BJ (cell line): ENCODE measurements at regions of chr19 and their contacts with region 1.

Region 1: DNA sequence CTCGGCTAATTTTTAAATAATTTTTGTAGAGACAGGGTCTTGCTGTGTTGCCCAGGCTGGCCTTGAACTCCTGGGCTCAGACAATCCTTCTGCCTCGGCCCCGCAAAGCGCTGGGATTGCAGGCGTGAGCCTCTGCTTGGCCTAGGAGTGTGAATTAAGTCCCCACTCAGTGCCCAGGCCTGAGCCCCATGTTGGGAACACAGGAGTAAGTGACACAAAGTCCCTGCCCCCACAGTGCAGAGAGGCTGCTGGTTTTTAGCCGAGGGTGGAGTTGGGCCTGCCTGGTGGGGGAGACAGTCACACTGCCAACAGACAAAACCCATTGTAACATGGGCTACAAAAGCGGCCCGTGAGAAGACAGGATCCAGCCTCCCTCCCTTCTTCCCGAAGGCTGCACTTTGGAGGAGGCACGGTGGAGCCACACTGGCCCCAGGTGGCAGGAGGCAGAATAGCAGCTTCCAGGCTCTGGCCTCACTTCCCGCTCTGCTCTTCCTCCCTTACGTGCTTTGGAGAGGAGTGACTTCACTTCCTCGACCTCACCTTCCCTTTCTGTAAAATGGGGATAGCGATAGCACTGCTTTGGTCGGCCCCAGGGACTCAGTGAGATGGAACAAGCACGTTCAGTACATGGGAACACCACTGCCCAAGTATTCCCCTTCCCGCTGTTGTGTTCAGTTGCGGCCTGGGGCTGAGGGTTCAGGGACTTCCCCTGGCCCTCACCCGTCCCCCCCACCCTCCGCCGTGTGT is 15.2 kb upstream of the EHD2 start:
- DNase-seq: no peak
- H3K4me3 ChIP-seq: no peak overlapping the region
- H3K27me3 ChIP-seq: no peaks in the 10 kb centered on the region
- CTCF ChIP-seq: peak; percentile 100

Region 2: GRCh38 chr19:47428177-47428894 is 269.7 kb before region 1 on chr19:
- CTCF ChIA-PET with region 1: interaction called, 428 read pairs
- POLR2A ChIA-PET with region 1: no interaction called
- DNase-seq: peak; percentile 97
- H3K4me3 ChIP-seq: peak overlapping the region; percentile 24; the same call in 1 of the 2 replicates
- H3K27me3 ChIP-seq: peaks cover 9% of the 10 kb centered on the region
- CTCF ChIP-seq: no peak

Region 3: GRCh38 chr19:47436712-47437401 is 261.2 kb before region 1 on chr19:
- CTCF ChIA-PET with region 1: interaction called, 428 read pairs
- POLR2A ChIA-PET with region 1: no interaction called
- DNase-seq: no peak
- H3K4me3 ChIP-seq: no peak overlapping the region
- H3K27me3 ChIP-seq: peaks cover 2% of the 10 kb centered on the region; the same call in 1 of the 2 replicates
- CTCF ChIP-seq: peak; percentile 90

Region 4: GRCh38 chr19:47514869-47515588 is 183.0 kb before region 1 on chr19 and contains the start of gene NAPA:
- CTCF ChIA-PET with region 1: interaction called, 15 read pairs
- POLR2A ChIA-PET with region 1: no interaction called
- DNase-seq: peak; percentile 99
- H3K4me3 ChIP-seq: peak within 1 kb of the TSS; percentile 78
- H3K27me3 ChIP-seq: 0 out of 2 replicates have a peak, but pooled peaks cover 1% of the 10 kb centered on the region
- CTCF ChIP-seq: no peak
- polyA plus RNA-seq, gene NAPA: 100 and 203 TPM in 2 replicates

Region 5: GRCh38 chr19:47540728-47541127 is 157.3 kb before region 1 on chr19:
- CTCF ChIA-PET with region 1: interaction called, 11 read pairs
- POLR2A ChIA-PET with region 1: no interaction called
- DNase-seq: no peak
- H3K4me3 ChIP-seq: no peak overlapping the region
- H3K27me3 ChIP-seq: peaks cover 7% of the 10 kb centered on the region; the same call in 1 of the 2 replicates
- CTCF ChIP-seq: peak; percentile 63

Region 6: DNA sequence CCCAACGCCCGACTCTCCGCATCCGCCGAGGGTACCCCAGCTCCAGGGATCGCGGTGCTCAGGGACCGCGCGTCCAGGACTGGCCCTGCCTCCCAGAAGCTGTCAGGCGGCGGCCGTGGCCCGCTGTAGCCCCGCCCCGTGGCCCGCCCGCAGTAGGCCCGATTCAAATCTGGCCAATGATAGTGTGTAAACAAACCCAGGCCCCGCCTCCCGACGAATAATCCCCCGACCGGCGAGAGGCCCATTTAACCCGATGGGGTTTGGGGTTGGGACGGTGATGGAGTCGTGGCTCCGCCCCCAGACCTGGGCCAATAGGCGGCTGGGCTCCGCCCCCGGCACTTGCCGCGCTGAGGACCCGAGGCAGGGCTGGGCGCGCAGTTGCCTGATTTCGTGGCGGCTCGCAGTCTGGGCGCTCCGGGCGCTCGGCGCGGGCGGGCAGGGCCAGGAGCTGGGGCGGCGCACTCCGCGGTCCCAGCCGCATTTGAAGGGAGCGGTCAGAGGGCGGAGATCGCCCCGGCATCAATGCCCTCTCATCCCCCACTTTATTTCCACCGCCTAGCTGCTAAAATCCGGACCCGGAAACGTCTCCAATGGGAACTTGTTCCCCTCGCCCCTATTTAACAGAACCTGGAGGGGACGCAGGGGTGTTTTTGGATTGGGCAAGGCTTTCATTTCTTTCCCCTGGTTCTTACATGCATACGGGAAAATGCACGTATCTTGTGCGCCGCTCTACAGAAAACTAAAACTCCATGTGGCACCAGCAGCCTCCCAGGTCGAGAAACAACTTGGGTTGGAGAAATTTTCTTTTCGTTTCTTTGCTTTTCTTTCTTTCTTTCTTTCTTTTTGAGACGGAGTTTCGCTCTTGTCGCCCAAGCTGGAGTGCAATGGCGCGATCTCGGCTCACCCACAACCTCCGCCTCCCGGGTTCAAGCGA is 97.5 kb before region 1 on chr19:
- CTCF ChIA-PET with region 1: interaction called, 10 read pairs
- POLR2A ChIA-PET with region 1: no interaction called
- DNase-seq: peak; percentile 94
- H3K4me3 ChIP-seq: peak overlapping the region; percentile 44
- H3K27me3 ChIP-seq: no peaks in the 10 kb centered on the region
- CTCF ChIP-seq: no peak

Region 7: DNA sequence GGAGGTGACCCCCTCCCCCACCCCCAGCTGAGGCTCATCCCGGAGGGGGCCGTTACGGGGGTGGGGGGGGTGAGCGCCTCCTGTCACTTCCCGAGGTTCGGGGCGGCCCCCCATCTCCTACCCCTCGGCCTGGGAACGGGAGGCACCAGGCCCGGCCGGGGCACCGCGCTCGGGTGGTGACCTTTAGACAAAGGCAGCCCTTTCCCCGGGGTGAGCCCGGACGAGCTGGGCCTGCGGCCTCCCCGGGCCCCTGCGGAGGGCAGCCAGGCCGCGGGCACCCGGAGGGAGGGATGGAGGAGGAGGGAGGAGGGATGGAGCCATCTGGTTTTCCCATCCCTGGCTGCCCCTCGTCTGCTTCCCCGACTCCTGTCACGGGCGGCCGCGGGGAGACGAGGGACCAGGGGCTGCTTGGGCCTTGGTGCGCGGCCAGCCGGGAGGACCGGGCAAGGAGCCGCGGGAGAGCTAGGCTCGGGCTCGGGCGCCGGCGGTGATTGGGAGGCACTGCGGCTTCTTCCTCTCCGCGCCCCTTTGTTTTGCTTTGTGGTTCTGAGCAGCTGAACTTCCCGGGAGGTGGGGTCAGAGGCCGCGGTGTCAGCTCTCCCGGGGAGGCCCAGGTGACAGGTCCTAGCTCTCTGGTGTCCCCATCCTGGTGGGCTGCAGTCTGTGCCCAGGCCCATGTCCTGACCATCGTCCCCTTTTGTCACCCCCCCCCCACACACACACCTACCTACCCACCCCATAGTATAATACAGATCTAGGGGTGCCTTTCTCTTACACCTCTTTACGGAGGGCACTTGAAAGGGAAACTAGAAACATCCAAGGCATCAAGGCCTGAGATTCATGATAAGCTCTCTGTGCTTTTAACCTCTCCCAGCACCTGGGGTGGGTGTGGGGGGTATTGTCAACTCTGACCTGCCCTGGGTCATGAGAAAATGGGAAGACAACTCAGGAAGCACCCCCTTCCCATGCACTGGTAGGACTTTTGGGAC is 87.8 kb before region 1 on chr19:
- CTCF ChIA-PET with region 1: interaction called, 11 read pairs
- POLR2A ChIA-PET with region 1: no interaction called
- DNase-seq: no peak
- H3K4me3 ChIP-seq: peak overlapping the region; percentile 66
- H3K27me3 ChIP-seq: no peaks in the 10 kb centered on the region
- CTCF ChIP-seq: no peak

Region 8: DNA sequence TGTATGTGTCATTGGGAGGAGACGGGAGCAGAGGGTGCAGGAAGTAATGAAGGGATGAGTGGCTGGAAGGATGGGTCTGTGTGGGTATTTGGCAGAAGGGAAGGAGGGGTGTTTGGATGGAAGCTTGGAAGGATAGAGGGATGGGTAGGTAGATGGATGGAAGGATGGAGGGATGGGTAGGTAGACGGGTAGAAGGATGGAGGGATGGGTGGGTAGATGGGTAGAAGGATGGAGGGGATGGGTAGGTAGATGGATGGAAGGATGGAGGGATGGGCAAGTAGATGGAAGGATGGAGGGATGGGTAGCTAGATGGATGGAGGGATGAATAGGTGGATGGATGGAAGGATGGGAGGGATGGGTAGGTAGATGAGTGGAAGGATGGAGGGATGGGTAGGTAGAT is 26.5 kb before region 1 on chr19:
- CTCF ChIA-PET with region 1: no interaction called
- POLR2A ChIA-PET with region 1: no interaction called
- DNase-seq: no peak
- H3K4me3 ChIP-seq: no peak overlapping the region
- H3K27me3 ChIP-seq: no peaks in the 10 kb centered on the region
- CTCF ChIP-seq: no peak

Region 9: GRCh38 chr19:47719047-47719859 is 21.2 kb after region 1 on chr19:
- CTCF ChIA-PET with region 1: no interaction called
- POLR2A ChIA-PET with region 1: no interaction called
- DNase-seq: peak; percentile 99
- H3K4me3 ChIP-seq: peak overlapping the region; percentile 28
- H3K27me3 ChIP-seq: no peaks in the 10 kb centered on the region
- CTCF ChIP-seq: no peak